ENCODE measurements at regions of chr4 and their contacts with region 1.

Region 1: DNA sequence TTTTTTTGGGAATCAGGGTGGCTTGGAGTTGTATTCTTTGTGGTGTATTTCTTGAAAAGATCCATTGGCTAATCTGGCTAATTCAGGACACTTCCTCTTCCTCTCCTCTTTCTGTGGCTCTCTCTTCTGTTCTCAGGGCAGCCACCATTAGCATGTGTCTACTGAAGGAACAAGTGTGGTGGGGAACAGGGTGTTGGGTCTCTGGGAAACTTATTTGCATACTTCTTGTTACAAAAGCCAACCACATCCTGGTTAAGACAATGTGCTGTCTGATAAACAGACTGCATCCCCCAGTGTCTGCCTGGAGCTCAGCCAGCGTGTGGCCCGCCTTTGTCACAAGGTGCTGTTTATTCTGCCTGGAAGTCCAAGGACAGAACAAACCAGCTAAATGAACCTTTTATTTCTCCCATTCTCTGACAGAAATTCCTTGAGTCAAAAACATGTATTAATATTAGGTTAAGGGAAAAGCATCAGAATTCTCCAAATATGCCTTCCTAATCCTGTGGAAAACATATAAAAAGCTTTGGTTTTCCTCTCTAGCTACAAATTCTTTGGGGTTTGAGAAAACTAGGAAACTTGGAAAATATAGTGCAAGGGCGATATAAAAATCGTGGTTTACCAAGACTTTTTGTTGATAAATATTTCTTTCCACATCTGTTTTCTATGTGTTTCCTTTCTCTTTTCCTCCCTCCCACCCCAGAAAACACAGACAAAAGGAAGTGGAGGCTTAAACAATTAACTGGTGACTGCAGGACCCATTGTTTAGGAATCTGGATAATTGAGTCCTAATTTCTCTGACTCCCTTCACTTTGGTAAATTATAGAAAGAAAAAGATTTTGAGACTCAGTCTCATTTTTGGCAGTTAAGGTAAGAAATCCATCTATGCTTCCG is 203.6 kb downstream of the SPRY1 start:
- DNase-seq: peak; percentile 58 to 84
- H3K4me3 ChIP-seq: no peak overlapping the region
- H3K27ac ChIP-seq: peak overlapping the region; percentile 81
- H3K4me1 ChIP-seq: peaks cover 0 to 6% of the 10 kb centered on the region in 2 donors
- H3K27me3 ChIP-seq: no peaks in the 10 kb centered on the region
- CTCF ChIP-seq: no peak
- POLR2A ChIP-seq: no peak

Region 2: DNA sequence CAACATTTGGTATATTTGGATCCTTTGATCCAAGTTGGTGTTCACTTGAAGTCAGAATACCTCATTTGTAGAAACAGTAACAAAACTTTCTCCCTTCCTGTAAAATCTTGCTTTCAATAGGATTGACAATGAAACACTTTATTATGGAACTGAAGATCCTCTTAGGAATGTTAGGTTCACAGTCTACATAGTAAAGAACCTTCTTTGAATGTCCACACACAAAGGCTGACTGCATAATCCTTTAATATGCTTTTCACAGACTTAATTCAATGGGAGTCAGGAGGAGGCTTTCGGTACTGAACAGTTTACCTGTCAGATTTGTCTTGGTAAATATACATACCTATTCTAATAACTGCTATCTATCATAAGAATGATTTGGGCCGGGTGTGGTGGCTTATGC is 15.1 kb before region 1 on chr4:
- intact Hi-C with region 1: loop called (anchors 2 kb)
- DNase-seq: no peak
- H3K4me3 ChIP-seq: no peak overlapping the region
- H3K27ac ChIP-seq: no peak overlapping the region
- H3K4me1 ChIP-seq: no peaks in the 10 kb centered on the region
- H3K27me3 ChIP-seq: no peaks in the 10 kb centered on the region
- CTCF ChIP-seq: no peak
- POLR2A ChIP-seq: no peak

Region 3: DNA sequence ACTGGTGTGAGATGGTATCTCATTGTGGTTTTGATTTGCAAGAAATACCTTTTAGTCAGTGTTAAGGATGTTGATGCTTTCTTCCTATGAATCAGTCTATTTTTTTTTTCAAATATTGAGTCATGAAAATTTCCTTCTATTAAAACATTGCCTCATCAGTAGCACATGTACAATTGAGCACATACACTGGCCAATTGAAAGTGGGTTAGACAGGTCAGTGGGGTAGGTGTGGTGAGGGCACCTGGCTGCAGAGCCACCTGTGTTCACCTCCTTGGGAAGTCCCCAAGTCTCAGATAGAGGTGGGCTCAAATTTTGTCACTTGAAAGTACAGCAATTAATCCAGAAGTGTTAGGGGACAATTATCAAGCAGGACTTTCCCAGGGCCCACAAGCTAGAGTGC is 40.1 kb after region 1 on chr4:
- intact Hi-C with region 1: no loop called
- DNase-seq: no peak
- H3K4me3 ChIP-seq: no peak overlapping the region
- H3K27ac ChIP-seq: no peak overlapping the region
- H3K4me1 ChIP-seq: no peaks in the 10 kb centered on the region
- H3K27me3 ChIP-seq: no peaks in the 10 kb centered on the region
- CTCF ChIP-seq: no peak
- POLR2A ChIP-seq: no peak

Region 4: DNA sequence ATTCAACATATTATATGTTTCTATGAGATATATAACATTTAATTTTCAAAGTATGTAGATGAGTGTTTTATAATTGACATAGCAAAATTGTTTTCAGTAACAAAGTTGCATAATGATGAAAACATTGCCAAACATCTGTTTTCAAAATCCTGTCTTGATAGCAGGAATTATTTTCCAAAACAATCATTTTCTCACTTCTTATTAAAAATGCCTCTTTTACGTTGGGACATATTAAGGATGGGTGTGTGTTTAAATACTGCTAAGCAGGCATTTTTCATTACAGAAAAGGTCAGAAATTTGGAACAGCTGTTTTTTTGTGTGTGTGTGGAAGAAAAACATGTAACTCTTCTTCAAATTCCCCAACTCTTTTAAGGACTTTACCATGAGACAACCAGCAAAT is 248.4 kb after region 1 on chr4:
- intact Hi-C with region 1: no loop called
- DNase-seq: no peak
- H3K4me3 ChIP-seq: no peak overlapping the region
- H3K27ac ChIP-seq: peak overlapping the region in 1 of 2 donors; percentile 2
- H3K4me1 ChIP-seq: no peaks in the 10 kb centered on the region
- H3K27me3 ChIP-seq: no peaks in the 10 kb centered on the region
- CTCF ChIP-seq: no peak
- POLR2A ChIP-seq: no peak